ENCODE measurements at regions of chr22 and their contacts with region 1.

Region 1: GRCh38 chr22:30408414-30409104 is 11.7 kb downstream of the SEC14L2 start:
- DNase-seq: no peak
- H3K4me3 ChIP-seq: no peak overlapping the region
- H3K27ac ChIP-seq: peak overlapping the region; percentile 10
- H3K4me1 ChIP-seq: peaks cover 13% of the 10 kb centered on the region
- H3K27me3 ChIP-seq: no peaks in the 10 kb centered on the region
- CTCF ChIP-seq: no peak

Region 2: DNA sequence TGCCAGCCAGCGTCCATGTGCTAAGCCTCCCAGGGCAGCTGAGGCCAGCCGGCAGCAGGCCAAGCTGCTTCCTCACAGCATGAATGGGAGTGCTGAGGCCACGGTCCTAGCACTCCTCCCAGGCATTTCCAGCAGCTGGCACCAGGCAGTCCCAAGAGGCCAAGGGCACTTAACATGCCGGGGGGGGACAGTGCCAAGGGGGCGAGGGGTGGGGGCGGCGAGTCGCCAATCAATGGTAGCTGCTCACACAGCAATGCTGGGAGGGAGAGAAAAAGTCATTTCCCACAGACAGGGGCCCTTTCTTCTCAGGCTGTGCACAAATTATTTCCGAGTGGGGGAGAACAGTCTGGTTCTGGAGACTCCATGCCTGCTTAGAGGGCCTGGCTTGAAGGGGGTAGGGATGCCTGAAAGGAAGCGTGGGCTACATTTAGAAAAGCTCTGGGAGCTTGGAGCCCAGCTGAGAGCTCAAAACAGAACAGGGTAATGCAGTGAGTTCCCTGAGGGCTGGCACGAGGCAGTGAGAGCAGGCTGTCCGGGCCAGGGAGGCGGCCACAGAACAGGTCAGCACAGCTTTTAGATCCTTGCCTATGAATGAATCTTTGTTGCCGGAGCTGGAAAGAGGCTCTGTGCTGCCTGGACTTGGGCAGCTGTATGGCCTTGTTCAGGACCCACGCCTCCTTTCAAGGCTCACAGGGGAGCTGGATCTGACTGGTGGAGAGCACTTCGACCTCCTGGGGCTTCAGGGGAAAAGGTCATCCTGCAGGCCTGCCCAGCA is 67.5 kb before region 1 on chr22:
- CTCF ChIA-PET with region 1: no interaction called
- POLR2A ChIA-PET with region 1: no interaction called
- intact Hi-C with region 1: loop called (anchors 10 kb)
- DNase-seq: no peak
- H3K4me3 ChIP-seq: no peak overlapping the region
- H3K27ac ChIP-seq: no peak overlapping the region
- H3K4me1 ChIP-seq: no peaks in the 10 kb centered on the region
- H3K27me3 ChIP-seq: no peaks in the 10 kb centered on the region
- CTCF ChIP-seq: no peak

Region 3: GRCh38 chr22:30381264-30381663 is 27.3 kb before region 1 on chr22:
- CTCF ChIA-PET with region 1: no interaction called
- POLR2A ChIA-PET with region 1: no interaction called
- intact Hi-C with region 1: no loop called
- DNase-seq: no peak
- H3K4me3 ChIP-seq: no peak overlapping the region
- H3K27ac ChIP-seq: no peak overlapping the region
- H3K4me1 ChIP-seq: no peaks in the 10 kb centered on the region
- H3K27me3 ChIP-seq: no peaks in the 10 kb centered on the region
- CTCF ChIP-seq: no peak

Region 4: DNA sequence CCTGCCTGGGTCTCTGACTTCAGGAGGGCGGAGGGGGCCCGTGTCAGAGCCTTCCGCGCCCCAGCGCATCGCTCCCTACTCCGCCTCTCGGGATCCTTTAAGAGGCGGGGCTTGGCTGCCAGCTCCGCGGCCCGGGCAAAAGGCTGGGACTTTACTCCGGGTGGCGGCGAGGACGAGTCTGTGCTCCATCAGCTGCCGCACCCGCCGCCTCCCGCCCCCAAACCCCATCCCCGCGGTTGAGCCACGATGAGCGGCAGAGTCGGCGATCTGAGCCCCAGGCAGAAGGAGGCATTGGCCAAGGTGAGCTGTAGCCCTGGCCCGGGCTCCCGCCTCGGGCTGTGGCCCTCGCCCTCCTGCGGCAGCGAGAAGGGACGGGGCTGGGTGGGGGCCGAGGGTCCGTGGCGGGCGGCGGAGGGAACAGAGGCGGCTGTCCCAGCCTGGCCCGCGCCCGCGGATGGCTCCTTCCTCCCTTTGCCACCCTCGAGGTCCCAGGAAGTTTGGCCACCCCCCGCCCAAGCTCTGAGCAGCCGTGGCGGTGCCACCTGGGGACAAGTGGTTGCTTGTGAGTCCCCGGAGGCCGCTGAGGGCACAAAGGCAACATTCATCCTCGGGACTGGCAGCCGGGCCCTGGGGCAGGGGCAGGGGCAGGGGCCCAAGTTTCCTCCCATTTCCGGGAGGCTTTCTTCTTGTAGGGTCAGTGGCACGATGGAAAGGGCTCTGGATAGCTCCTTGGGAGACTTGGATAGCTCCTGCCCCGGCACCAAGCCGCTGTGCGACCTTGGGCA is 11.5 kb before region 1 on chr22 and contains the start of gene SEC14L2:
- CTCF ChIA-PET with region 1: no interaction called
- POLR2A ChIA-PET with region 1: interaction called, 15 read pairs
- intact Hi-C with region 1: no loop called
- DNase-seq: peak; percentile 80
- H3K4me3 ChIP-seq: peak within 1 kb of the TSS; percentile 74
- H3K27ac ChIP-seq: peak within 1 kb of the TSS; percentile 62
- H3K4me1 ChIP-seq: peaks cover 26% of the 10 kb centered on the region
- H3K27me3 ChIP-seq: no peaks in the 10 kb centered on the region
- CTCF ChIP-seq: no peak
- total RNA-seq, gene SEC14L2: 14.4 and 19.4 TPM in 2 replicates

Measured in A673 (cell line).